ENCODE measurements at regions of chr11 and their contacts with region 1.

Region 1: DNA sequence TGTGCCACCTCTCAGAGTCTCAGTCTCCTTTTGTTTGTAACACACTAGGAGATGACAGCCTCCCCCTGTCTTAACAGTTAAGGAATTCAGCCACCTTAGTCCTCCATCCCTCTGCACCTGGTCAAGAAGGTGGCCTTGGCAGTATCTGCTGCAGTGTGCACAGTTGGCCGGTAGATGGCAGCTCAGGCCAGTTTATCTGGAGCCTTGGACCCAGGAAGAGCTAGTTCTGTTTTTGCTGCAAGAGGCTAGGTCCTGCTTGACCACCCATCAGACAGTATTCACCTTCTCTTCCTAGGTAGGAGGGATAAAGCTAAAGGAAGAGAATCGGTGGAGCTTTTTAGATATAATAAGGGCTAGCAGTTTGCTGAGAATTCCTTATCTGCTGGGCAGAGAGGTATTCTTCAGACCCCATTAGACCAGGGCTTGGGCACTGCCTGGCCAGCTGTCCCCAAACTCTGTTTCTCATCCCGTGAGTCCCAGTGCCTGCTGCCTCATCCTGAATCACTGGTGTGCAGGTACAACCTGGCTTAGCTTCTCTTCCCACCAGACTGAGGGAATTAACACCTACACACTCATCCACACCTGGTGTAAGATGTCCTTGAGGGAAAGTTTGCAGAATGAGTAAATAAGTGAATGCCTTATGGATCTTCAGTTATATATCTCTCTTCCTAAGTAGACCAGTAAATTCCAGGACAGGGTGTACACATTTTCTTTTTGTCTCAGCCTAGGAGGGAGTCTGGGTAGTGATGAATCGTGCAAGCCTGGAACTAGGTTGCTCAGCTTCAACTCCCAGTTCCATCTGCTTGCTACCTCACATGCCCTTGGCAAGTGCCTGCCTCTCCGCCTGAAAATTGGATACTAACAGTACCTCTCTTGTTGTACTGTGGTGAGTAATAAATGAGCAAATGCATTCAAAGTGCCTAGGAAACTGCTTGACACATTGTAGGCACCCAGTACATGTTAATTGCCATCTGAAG is 70.8 kb upstream of the NARS2 start:
- DNase-seq: peak; percentile 70
- H3K4me3 Mint-ChIP-seq: no peak overlapping the region
- H3K27ac Mint-ChIP-seq: no peak overlapping the region
- H3K4me1 Mint-ChIP-seq: peaks cover 23% of the 10 kb centered on the region
- H3K27me3 Mint-ChIP-seq: no peaks in the 10 kb centered on the region

Region 2: GRCh38 chr11:78338138-78338537 is 307.4 kb before region 1 on chr11:
- CTCF ChIA-PET with region 1: no interaction called
- intact Hi-C with region 1: no loop called
- DNase-seq: no peak
- H3K4me3 Mint-ChIP-seq: no peak overlapping the region
- H3K27ac Mint-ChIP-seq: no peak overlapping the region
- H3K4me1 Mint-ChIP-seq: peaks cover 2% of the 10 kb centered on the region
- H3K27me3 Mint-ChIP-seq: peaks cover 2% of the 10 kb centered on the region

Region 3: DNA sequence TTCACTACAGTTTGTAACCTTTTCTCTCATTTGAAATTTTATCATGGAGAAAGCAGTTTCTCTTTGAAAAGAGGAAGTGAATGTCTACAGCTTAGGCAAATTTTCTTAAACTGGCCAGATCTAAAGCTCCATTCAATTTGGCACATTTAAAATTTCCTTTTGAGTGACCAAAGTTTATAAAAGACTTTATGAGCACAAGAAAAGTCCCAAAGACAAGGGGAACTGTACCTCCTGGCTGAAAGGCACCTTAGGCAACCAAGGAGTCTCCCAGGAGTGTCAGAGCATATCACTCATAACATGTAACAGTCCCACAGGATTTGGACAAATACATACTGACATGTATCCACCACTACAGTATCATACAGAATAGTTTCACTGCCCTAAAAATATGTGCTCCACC is 112.1 kb before region 1 on chr11:
- CTCF ChIA-PET with region 1: no interaction called
- intact Hi-C with region 1: no loop called
- DNase-seq: no peak
- H3K4me3 Mint-ChIP-seq: no peak overlapping the region
- H3K27ac Mint-ChIP-seq: no peak overlapping the region
- H3K4me1 Mint-ChIP-seq: no peaks in the 10 kb centered on the region
- H3K27me3 Mint-ChIP-seq: no peaks in the 10 kb centered on the region

Region 4: GRCh38 chr11:78660471-78660870 is 15.0 kb after region 1 on chr11:
- CTCF ChIA-PET with region 1: interaction called, 22 read pairs
- intact Hi-C with region 1: no loop called
- DNase-seq: no peak
- H3K4me3 Mint-ChIP-seq: no peak overlapping the region
- H3K27ac Mint-ChIP-seq: no peak overlapping the region
- H3K4me1 Mint-ChIP-seq: no peaks in the 10 kb centered on the region
- H3K27me3 Mint-ChIP-seq: peaks cover 5% of the 10 kb centered on the region

Region 5: GRCh38 chr11:78715639-78716311 is 70.3 kb after region 1 on chr11:
- CTCF ChIA-PET with region 1: interaction called, 178 read pairs
- intact Hi-C with region 1: loop called (anchors 1 kb)
- DNase-seq: peak; percentile 77
- H3K4me3 Mint-ChIP-seq: no peak overlapping the region
- H3K27ac Mint-ChIP-seq: no peak overlapping the region
- H3K4me1 Mint-ChIP-seq: no peaks in the 10 kb centered on the region
- H3K27me3 Mint-ChIP-seq: no peaks in the 10 kb centered on the region

Region 6: GRCh38 chr11:78798660-78799059 is 153.1 kb after region 1 on chr11:
- CTCF ChIA-PET with region 1: interaction called, 13 read pairs
- intact Hi-C with region 1: loop called (anchors 5 kb)
- DNase-seq: peak; percentile 62
- H3K4me3 Mint-ChIP-seq: no peak overlapping the region
- H3K27ac Mint-ChIP-seq: no peak overlapping the region
- H3K4me1 Mint-ChIP-seq: no peaks in the 10 kb centered on the region
- H3K27me3 Mint-ChIP-seq: no peaks in the 10 kb centered on the region

Region 7: GRCh38 chr11:79076526-79077115 is 431.1 kb after region 1 on chr11:
- CTCF ChIA-PET with region 1: interaction called, 6 read pairs
- intact Hi-C with region 1: loop called (anchors 1 kb)
- DNase-seq: peak; percentile 31
- H3K4me3 Mint-ChIP-seq: no peak overlapping the region
- H3K27ac Mint-ChIP-seq: no peak overlapping the region
- H3K4me1 Mint-ChIP-seq: no peaks in the 10 kb centered on the region
- H3K27me3 Mint-ChIP-seq: peaks cover 2% of the 10 kb centered on the region

Region 8: GRCh38 chr11:79201637-79202333 is 556.3 kb after region 1 on chr11:
- CTCF ChIA-PET with region 1: no interaction called
- intact Hi-C with region 1: no loop called
- DNase-seq: no peak
- H3K4me3 Mint-ChIP-seq: no peak overlapping the region
- H3K27ac Mint-ChIP-seq: no peak overlapping the region
- H3K4me1 Mint-ChIP-seq: no peaks in the 10 kb centered on the region
- H3K27me3 Mint-ChIP-seq: peaks cover 2% of the 10 kb centered on the region

Region 9: DNA sequence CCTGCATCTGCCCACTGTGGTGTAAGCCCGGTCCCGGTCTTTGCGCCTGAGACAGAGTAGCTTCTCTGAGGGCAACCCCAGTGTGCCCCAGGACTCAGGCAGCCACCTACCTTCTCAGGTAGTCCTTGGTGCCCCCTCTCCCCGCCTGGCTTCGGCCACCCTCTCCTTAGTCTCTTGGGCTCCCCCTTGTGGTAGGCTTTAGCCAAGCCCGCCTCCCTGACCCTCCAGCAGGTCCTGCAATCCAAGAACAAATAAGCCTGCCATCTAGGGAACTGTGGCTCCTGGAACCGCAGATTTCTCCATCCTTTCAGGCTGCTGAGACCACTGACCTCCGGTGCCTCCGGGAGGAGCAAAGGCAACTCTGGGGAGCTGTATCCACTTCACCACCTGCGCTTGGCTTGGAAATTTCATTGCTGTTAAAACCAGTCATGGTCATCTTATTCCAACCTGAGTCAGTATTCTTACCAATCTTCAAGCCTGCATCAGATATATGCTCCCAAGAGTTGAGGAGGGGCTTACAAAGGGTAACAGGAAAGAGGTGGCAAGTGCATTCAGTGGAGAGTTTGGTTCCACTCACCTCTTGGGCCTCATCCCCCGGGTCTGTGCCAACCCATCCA is 848.1 kb after region 1 on chr11:
- CTCF ChIA-PET with region 1: interaction called, 4 read pairs
- intact Hi-C with region 1: loop called (anchors 1 kb)
- DNase-seq: peak; percentile 53
- H3K4me3 Mint-ChIP-seq: no peak overlapping the region
- H3K27ac Mint-ChIP-seq: no peak overlapping the region
- H3K4me1 Mint-ChIP-seq: peaks cover 2% of the 10 kb centered on the region
- H3K27me3 Mint-ChIP-seq: peaks cover 18% of the 10 kb centered on the region

Measured in activated naive CD4-positive, alpha-beta T cell treated with anti-CD3 and anti-CD28 coated beads for 36 hours (primary cell).